ENCODE measurements at regions of chr15 and their contacts with region 1.

Region 1: DNA sequence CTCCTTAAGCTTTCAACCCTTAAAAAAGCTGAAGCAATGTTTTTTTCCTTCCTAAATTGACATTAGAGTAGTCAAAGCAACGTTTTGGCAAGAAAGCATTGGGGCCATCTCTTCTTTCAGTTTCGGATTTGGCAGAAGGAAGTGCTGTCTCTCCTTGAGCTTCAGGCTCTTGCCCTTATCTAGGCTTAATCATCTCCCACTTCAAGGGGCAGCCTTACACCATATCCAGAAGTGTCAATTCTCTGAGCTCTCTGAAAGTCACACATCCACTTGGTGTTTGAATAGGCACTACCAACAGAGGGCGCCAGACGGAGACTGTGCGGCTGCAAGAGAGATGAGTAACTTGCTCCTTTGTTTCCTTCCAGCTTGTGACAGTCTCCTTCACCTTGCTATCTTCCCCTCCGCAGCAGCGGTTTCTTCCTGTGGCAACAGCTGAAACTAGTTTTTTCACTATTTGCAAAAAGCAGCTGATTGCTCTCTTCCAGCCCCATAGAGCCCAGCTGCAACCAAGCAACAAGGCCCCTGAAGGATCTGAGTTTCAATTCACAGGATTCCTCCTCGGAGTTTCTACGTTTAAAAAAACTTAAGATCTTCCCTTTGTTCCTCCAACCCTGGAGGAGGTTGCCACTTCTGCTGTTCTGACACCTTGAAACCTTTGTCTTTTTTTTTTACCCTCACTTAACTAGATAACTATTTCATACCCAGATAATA is 147.0 kb upstream of the SLCO3A1 start:
- DNase-seq: peak; percentile 36
- H3K4me3 ChIP-seq: no peak overlapping the region
- H3K27ac ChIP-seq: no peak overlapping the region
- H3K27me3 ChIP-seq: peaks cover 2% of the 10 kb centered on the region
- CTCF ChIP-seq: peak; percentile 94

Region 2: DNA sequence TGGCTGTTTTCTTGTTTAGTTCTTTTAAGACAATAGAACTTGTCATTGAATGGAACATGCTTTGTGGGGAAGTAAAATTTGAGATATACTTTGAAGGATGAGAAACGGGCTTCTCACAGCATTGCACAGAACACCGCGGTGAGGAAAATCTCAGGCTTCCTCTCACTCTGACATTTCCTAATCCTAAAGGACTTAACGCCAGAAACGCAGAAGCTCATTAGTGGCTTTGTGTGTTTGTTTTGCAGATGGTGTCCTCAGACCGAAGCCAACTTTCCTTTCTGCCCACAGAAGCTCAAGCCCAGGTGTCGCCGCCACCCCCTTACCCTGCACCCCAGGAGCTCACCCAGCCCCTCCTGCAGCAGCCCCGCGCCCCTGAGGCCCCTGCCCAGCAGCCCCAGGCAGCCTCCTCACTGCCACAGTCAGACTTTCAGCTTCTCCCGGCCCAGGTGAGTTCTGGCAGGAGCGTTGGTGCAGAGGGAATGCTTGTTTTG is 1068.2 kb before region 1 on chr15:
- CTCF ChIA-PET with region 1: no interaction called
- POLR2A ChIA-PET with region 1: no interaction called
- DNase-seq: no peak
- H3K4me3 ChIP-seq: no peak overlapping the region
- H3K27ac ChIP-seq: no peak overlapping the region
- H3K27me3 ChIP-seq: no peaks in the 10 kb centered on the region
- CTCF ChIP-seq: no peak

Region 3: GRCh38 chr15:91302588-91303439 is 403.7 kb before region 1 on chr15:
- CTCF ChIA-PET with region 1: interaction called, 34 read pairs
- POLR2A ChIA-PET with region 1: no interaction called
- DNase-seq: peak; percentile 30
- H3K4me3 ChIP-seq: no peak overlapping the region
- H3K27ac ChIP-seq: no peak overlapping the region
- H3K27me3 ChIP-seq: peaks cover 5% of the 10 kb centered on the region
- CTCF ChIP-seq: peak; percentile 81

Region 4: GRCh38 chr15:91566141-91566540 is 140.3 kb before region 1 on chr15:
- CTCF ChIA-PET with region 1: no interaction called
- POLR2A ChIA-PET with region 1: no interaction called
- DNase-seq: no peak
- H3K4me3 ChIP-seq: no peak overlapping the region
- H3K27ac ChIP-seq: no peak overlapping the region
- H3K27me3 ChIP-seq: no peaks in the 10 kb centered on the region
- CTCF ChIP-seq: no peak

Region 5: GRCh38 chr15:91717811-91718210 is 11.3 kb after region 1 on chr15:
- CTCF ChIA-PET with region 1: interaction called, 17 read pairs
- POLR2A ChIA-PET with region 1: no interaction called
- DNase-seq: no peak
- H3K4me3 ChIP-seq: no peak overlapping the region
- H3K27ac ChIP-seq: no peak overlapping the region
- H3K27me3 ChIP-seq: no peaks in the 10 kb centered on the region
- CTCF ChIP-seq: no peak

Region 6: GRCh38 chr15:91852741-91853510 is 146.4 kb after region 1 on chr15:
- CTCF ChIA-PET with region 1: interaction called, 10 read pairs
- POLR2A ChIA-PET with region 1: no interaction called
- DNase-seq: no peak
- H3K4me3 ChIP-seq: peak overlapping the region; percentile 72
- H3K27ac ChIP-seq: peak overlapping the region; percentile 72
- H3K27me3 ChIP-seq: no peaks in the 10 kb centered on the region
- CTCF ChIP-seq: peak; percentile 70

Region 7: DNA sequence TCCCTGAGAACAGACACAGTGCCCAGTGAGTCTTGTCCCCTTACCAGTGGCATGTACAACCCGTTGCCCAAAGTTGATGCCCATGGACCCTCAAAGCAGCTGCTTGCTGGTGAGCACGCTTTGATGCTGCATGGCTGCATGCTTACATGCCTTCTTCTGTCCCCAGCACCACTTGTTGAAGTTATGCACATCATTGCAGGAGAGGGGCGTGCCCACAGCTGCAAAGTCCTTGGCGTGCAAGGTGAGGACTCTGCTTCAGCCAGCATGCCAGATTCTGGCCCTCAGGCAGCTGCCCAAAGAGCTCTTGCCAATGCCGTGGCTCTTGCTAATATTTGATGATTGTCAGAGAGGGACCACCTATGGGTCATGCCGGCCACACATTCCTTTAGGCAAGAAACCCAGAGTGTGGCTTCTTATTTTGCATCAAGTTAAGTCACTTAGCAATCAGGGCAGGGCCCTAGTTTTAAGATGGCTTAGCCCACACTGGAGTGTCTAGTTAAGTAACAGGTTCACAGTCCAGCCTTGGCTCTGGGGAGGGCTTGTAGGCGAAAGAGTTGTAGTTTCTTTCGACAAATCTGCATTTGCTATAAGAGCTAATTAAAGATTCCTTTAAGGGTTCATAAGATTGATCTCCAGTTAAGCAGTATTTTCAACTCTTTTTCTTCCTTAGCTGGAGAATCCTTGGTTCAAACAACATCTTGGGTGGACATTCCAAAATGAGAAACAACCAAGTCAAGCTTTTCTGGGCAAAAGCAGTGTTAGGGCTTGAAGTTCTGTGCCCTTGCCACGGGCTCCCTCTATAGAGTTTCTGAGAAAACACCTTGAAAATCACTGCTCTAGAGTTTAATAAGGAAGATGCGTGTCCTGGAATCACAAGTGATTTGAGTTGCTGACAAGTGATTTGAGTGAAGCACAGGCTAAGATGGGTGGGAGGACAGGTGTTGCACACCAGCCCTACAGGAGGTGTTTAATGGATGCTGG is 275.6 kb after region 1 on chr15:
- CTCF ChIA-PET with region 1: interaction called, 10 read pairs
- POLR2A ChIA-PET with region 1: no interaction called
- DNase-seq: no peak
- H3K4me3 ChIP-seq: no peak overlapping the region
- H3K27ac ChIP-seq: no peak overlapping the region
- H3K27me3 ChIP-seq: no peaks in the 10 kb centered on the region
- CTCF ChIP-seq: peak; percentile 42